ENCODE measurements at regions of chr9 and their contacts with region 1.

Region 1: GRCh38 chr9:68708582-68708912 is 3.5 kb downstream of the PIP5K1B start:
- DNase-seq: peak in 2 of 3 donors; percentile 37 to 40
- H3K4me3 ChIP-seq: no peak overlapping the region
- H3K27ac ChIP-seq: no peak overlapping the region
- H3K4me1 ChIP-seq: peaks cover 7 to 59% (median 29%) of the 10 kb centered on the region in 4 experiments
- H3K27me3 ChIP-seq: peaks cover 0 to 2% (median 0%) of the 10 kb centered on the region in 5 experiments

Region 2: GRCh38 chr9:68744426-68744825 is 35.9 kb after region 1 on chr9:
- CTCF ChIA-PET with region 1: interaction called, 11 read pairs
- POLR2A ChIA-PET with region 1: no interaction called
- DNase-seq: peak in 2 of 3 donors; percentile 56 to 69
- H3K4me3 ChIP-seq: peak overlapping the region in 1 of 7 experiments; percentile 25
- H3K27ac ChIP-seq: peak overlapping the region; percentile 3 to 7
- H3K4me1 ChIP-seq: peaks cover 8 to 68% (median 35%) of the 10 kb centered on the region in 4 experiments
- H3K27me3 ChIP-seq: no peaks in the 10 kb centered on the region

Region 3: GRCh38 chr9:68817079-68817875 is 108.7 kb after region 1 on chr9:
- CTCF ChIA-PET with region 1: no interaction called
- POLR2A ChIA-PET with region 1: no interaction called
- DNase-seq: no peak
- H3K4me3 ChIP-seq: no peak overlapping the region
- H3K27ac ChIP-seq: no peak overlapping the region
- H3K4me1 ChIP-seq: no peaks in the 10 kb centered on the region
- H3K27me3 ChIP-seq: no peaks in the 10 kb centered on the region

Measured in common myeloid progenitor, CD34-positive (primary cell).